CD8-positive, alpha-beta T cell (primary cell): ENCODE measurements at regions of chr9 and their contacts with region 1.

Region 1: DNA sequence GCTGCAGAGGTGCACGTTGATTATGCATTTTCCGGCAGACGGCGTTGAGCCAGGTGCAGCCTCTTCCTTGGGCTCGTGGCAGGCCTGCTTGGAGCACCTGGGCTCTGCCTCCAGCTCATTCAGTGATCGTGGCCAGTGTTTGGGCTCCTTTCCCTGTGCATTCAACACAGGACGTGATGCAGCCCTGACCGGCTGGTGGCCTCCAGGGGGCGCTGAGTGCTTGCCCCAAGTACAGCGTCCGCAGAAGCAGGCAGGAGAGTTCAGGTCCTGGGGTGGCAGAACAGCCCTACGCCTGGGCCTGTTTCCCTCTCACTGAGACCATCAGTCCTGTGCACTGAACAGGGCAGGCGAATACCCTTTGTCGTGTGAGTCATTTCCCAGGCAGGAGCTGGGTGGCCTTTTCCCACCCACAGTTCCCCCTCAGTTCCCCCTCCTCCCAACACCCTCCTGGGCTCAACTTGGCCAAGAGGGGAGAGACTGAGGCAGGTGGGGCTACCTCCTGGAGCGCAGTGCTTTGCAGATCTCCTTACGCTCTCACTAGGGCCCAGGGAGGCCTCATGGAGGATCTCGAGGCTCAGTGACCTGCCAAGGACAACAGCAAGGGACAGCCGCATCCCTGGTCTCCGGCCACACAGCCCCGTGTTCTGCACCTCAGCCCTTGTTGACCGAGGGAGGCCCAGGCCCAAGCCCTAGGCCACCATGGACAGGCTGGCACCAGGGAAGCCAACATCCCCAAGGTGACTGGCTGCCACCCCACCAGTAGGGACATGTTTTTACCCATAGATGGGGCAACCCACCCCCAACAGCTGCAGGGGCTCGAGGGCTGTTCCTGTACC is 52.9 kb downstream of the LRSAM1 start:
- DNase-seq: peak; percentile 57 to 89 (median 82)
- ATAC-seq: peak; percentile 93
- H3K4me3 ChIP-seq: no peak overlapping the region
- H3K4me3 Mint-ChIP-seq: no peak overlapping the region
- H3K27ac ChIP-seq: no peak overlapping the region
- H3K27ac Mint-ChIP-seq: no peak overlapping the region
- H3K4me1 ChIP-seq: no peaks in the 10 kb centered on the region
- H3K4me1 Mint-ChIP-seq: no peaks in the 10 kb centered on the region
- H3K27me3 ChIP-seq: no peaks in the 10 kb centered on the region
- H3K27me3 Mint-ChIP-seq: no peaks in the 10 kb centered on the region
- CTCF ChIP-seq: peak; percentile 66

Region 2: GRCh38 chr9:127423934-127424675 is 80.1 kb before region 1 on chr9 and contains the start of gene ZNF79:
- CTCF ChIA-PET with region 1: no interaction called
- POLR2A ChIA-PET with region 1: no interaction called
- intact Hi-C with region 1: no loop called
- DNase-seq: peak; percentile 81 to 94 (median 91)
- ATAC-seq: peak; percentile 84
- H3K4me3 ChIP-seq: peak within 1 kb of the TSS; percentile 71 to 98
- H3K4me3 Mint-ChIP-seq: peak within 1 kb of the TSS; percentile 99
- H3K27ac ChIP-seq: peak within 1 kb of the TSS; percentile 67 to 72
- H3K27ac Mint-ChIP-seq: peak within 1 kb of the TSS; percentile 95
- H3K4me1 ChIP-seq: peaks cover 25% of the 10 kb centered on the region
- H3K4me1 Mint-ChIP-seq: peaks cover 44% of the 10 kb centered on the region
- H3K27me3 ChIP-seq: no peaks in the 10 kb centered on the region
- H3K27me3 Mint-ChIP-seq: no peaks in the 10 kb centered on the region
- CTCF ChIP-seq: no peak
- total RNA-seq, gene ZNF79: 7.5 to 7.7 TPM

Region 3: DNA sequence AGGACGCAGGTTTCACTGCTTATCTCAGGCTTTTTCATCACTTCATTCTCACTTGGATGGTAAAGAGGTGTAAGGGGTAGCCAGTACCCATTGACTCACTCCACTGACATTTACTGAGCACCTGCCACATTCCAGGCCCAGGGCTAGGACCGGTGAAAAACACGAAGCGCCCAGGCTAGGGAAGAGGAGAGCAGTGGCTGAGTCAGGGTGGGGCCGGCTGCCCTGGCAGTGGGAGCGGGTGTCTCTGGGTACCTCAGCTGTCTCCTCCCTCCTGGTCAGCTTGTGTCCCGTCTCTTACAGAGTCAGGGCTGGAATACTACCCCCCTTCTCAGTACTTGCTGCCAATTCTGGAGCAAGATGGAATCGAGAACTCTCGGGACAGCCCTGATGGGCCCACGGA is 30.7 kb before region 1 on chr9:
- CTCF ChIA-PET with region 1: no interaction called
- POLR2A ChIA-PET with region 1: no interaction called
- intact Hi-C with region 1: no loop called
- DNase-seq: no peak
- ATAC-seq: no peak
- H3K4me3 ChIP-seq: no peak overlapping the region
- H3K4me3 Mint-ChIP-seq: no peak overlapping the region
- H3K27ac ChIP-seq: no peak overlapping the region
- H3K27ac Mint-ChIP-seq: no peak overlapping the region
- H3K4me1 ChIP-seq: no peaks in the 10 kb centered on the region
- H3K4me1 Mint-ChIP-seq: no peaks in the 10 kb centered on the region
- H3K27me3 ChIP-seq: no peaks in the 10 kb centered on the region
- H3K27me3 Mint-ChIP-seq: no peaks in the 10 kb centered on the region
- CTCF ChIP-seq: no peak

Region 4: DNA sequence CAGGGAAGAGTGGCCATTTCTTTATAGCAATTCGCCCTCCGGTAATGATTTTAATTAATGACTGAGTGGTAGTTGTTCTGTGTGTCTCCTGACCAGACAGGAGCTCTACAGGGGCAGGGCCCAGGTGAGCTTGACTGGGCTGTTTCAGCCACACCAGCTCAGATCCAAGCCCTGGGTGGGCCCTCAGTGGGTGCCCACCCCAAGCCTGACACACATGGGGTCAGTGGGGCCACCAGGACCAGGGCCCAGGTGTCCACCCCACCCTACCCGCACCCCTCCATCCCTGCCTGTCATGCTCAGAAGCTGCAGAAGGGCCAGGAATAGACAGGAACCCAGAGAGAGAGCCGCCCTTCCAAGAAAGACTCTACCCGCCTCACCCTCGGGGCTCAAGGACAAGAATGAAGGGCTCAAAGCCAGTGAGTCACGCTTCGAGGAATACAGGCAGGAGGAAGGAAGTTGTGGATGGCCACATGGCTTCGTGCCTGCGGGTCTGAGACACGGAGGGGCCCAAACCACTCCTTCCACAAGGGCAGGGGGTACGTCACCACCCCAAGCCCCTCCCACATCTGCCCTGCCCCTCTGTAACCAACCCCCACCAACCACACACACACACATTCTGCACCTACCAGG is 51.7 kb after region 1 on chr9:
- CTCF ChIA-PET with region 1: interaction called, 11 read pairs
- POLR2A ChIA-PET with region 1: no interaction called
- intact Hi-C with region 1: no loop called
- DNase-seq: peak in 8 of 9 experiments; percentile 31 to 71 (median 64)
- ATAC-seq: peak; percentile 87
- H3K4me3 ChIP-seq: no peak overlapping the region
- H3K4me3 Mint-ChIP-seq: peak overlapping the region; percentile 69
- H3K27ac ChIP-seq: peak overlapping the region in 1 of 2 experiments; percentile 57
- H3K27ac Mint-ChIP-seq: peak overlapping the region; percentile 77
- H3K4me1 ChIP-seq: peaks cover 52% of the 10 kb centered on the region
- H3K4me1 Mint-ChIP-seq: peaks cover 55% of the 10 kb centered on the region
- H3K27me3 ChIP-seq: no peaks in the 10 kb centered on the region
- H3K27me3 Mint-ChIP-seq: no peaks in the 10 kb centered on the region
- CTCF ChIP-seq: no peak

Region 5: DNA sequence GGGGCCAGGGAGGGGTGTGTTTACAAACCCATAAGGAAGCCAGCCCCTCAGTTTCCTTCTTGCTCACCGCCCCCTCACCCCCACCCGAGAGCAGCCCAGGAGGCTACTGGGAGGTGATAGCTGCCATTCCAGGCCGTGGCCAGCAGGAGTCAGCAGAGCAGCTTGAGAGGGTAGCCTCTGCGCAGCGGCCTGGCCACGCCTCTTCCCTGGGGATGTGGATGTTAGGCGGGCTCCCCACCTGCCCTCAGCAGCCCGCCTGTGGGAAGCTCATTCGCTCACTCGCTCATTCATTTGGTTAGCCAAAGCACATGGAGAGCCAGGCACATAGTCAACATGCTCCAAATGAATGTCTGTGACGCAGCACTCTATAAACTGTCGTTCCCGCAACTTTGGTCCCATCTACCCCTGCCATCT is 439.6 kb after region 1 on chr9:
- CTCF ChIA-PET with region 1: no interaction called
- POLR2A ChIA-PET with region 1: no interaction called
- intact Hi-C with region 1: no loop called
- DNase-seq: peak; percentile 49 to 87 (median 78)
- ATAC-seq: peak; percentile 85
- H3K4me3 ChIP-seq: no peak overlapping the region
- H3K4me3 Mint-ChIP-seq: no peak overlapping the region
- H3K27ac ChIP-seq: no peak overlapping the region
- H3K27ac Mint-ChIP-seq: peak overlapping the region; percentile 89
- H3K4me1 ChIP-seq: peaks cover 39% of the 10 kb centered on the region
- H3K4me1 Mint-ChIP-seq: peaks cover 35% of the 10 kb centered on the region
- H3K27me3 ChIP-seq: no peaks in the 10 kb centered on the region
- H3K27me3 Mint-ChIP-seq: no peaks in the 10 kb centered on the region
- CTCF ChIP-seq: peak; percentile 83